Activated CD4-positive, alpha-beta memory T cell treated with anti-CD3 and anti-CD28 coated beads for 36 hours (primary cell): ENCODE measurements at regions of chr18 and their contacts with region 1.

Region 1: DNA sequence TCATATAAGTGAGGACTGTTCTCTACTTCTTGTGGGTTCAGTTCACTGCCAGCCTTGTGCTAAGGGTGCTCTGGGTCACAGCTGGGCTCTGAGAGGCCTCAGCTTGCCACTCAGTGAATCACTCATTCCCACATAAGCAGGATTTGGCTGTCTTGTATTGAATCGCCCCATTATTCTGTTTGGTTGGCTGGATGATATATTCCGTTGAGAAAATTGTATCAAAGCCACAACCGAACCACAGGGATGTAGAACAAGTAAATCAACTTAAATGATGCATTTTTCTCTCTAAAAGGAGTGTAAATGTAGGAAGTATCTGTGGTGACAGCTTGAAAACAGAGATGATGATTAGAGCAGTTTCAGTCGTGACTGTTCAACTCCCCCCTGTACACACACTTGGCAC is 39.6 kb downstream of the TTC39C start:
- DNase-seq: peak; percentile 60
- H3K4me3 Mint-ChIP-seq: no peak overlapping the region
- H3K27ac Mint-ChIP-seq: peak overlapping the region; percentile 20
- H3K4me1 Mint-ChIP-seq: peaks cover 80% of the 10 kb centered on the region
- H3K27me3 Mint-ChIP-seq: no peaks in the 10 kb centered on the region

Region 2: GRCh38 chr18:24031916-24032315 is 22.2 kb before region 1 on chr18:
- CTCF ChIA-PET with region 1: no interaction called
- POLR2A ChIA-PET with region 1: interaction called, 3 read pairs
- intact Hi-C with region 1: loop called (anchors 2 kb)
- DNase-seq: no peak
- H3K4me3 Mint-ChIP-seq: no peak overlapping the region
- H3K27ac Mint-ChIP-seq: peak overlapping the region; percentile 16
- H3K4me1 Mint-ChIP-seq: peaks cover 81% of the 10 kb centered on the region
- H3K27me3 Mint-ChIP-seq: no peaks in the 10 kb centered on the region

Region 3: GRCh38 chr18:24153397-24153796 is 99.3 kb after region 1 on chr18:
- CTCF ChIA-PET with region 1: no interaction called
- POLR2A ChIA-PET with region 1: no interaction called
- intact Hi-C with region 1: no loop called
- DNase-seq: no peak
- H3K4me3 Mint-ChIP-seq: no peak overlapping the region
- H3K27ac Mint-ChIP-seq: no peak overlapping the region
- H3K4me1 Mint-ChIP-seq: no peaks in the 10 kb centered on the region
- H3K27me3 Mint-ChIP-seq: no peaks in the 10 kb centered on the region